GM12878 (cell line): ENCODE measurements at regions of chr10 and their contacts with region 1.

Region 1: GRCh38 chr10:62666275-62666674 is 138.2 kb upstream of the ADO start:
- DNase-seq: no peak
- ATAC-seq: peak; percentile 19; the same call in 1 of the 3 replicates
- H3K4me3 ChIP-seq: no peak overlapping the region
- H3K27ac ChIP-seq: no peak overlapping the region
- H3K4me1 ChIP-seq: peaks cover 4% of the 10 kb centered on the region; the same call in 1 of the 2 replicates
- H3K27me3 ChIP-seq: no peaks in the 10 kb centered on the region
- CTCF ChIP-seq: no peak
- EP300 ChIP-seq: no peak
- POLR2A ChIP-seq: no peak
- RAD21 ChIP-seq: no peak

Region 2: DNA sequence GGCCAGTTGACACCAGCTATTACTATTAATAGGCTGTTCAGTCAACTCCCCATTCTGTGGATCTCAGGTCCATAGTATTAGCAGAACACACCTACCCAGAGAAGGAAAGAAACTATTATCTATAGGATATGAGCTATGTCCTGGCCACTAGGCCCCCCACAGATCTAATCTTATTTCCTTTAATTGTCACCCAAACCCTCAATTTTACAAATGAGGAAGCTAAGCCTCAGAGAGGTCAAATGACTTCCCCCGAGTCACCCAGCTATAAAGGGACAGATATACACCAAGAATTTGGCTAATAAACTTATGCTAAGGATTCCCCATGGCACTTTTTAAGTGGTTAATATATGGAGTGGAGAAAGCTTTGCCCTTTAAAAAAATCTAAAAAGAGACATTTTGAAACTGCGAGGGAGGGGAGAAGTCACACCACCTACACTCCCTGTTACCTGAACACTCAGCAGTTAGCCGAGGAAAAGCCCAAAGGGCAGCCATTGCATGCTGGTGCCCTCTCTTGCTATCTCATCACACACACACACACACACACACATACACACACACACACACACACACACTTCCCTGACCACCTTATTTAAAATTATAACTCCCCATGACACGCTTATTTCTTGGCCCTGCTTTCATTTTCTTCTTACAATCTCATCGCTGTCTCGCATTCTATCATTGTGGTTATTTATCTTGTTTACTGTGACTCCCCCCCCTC is 18.7 kb before region 1 on chr10:
- CTCF ChIA-PET with region 1: no interaction called
- POLR2A ChIA-PET with region 1: interaction called, 3 read pairs
- RAD21 ChIA-PET with region 1: interaction called, 12 read pairs
- SMC1A ChIA-PET with region 1: interaction called, 21 read pairs
- in situ Hi-C with region 1: no loop called
- intact Hi-C with region 1: no loop called
- DNase-seq: no peak
- ATAC-seq: peak; percentile 59
- H3K4me3 ChIP-seq: no peak overlapping the region
- H3K27ac ChIP-seq: no peak overlapping the region
- H3K4me1 ChIP-seq: peaks cover 29% of the 10 kb centered on the region
- H3K27me3 ChIP-seq: no peaks in the 10 kb centered on the region
- CTCF ChIP-seq: no peak
- EP300 ChIP-seq: peak; percentile 29 to 40; a peak in 1 of 4 replicates
- POLR2A ChIP-seq: no peak
- RAD21 ChIP-seq: no peak

Region 3: DNA sequence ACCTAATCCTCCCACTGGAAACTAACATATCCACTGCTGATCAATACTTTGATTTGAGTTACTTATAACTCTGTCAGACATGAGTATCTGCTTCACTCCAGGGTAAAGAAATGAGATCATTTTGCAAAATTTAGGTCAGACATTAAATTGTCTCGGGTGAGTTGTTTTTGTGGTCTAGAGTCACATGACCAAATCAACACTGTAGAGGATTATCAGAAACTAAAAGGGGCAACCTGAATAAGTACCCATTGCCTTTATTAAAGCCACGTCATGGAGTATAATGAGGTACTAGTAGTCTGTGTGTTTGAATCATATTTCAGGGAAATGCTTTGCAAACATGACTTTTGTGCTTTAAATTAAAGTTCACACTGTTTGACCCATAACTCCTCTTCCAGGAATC is 30.5 kb after region 1 on chr10:
- CTCF ChIA-PET with region 1: no interaction called
- POLR2A ChIA-PET with region 1: no interaction called
- RAD21 ChIA-PET with region 1: no interaction called
- SMC1A ChIA-PET with region 1: no interaction called
- in situ Hi-C with region 1: no loop called
- intact Hi-C with region 1: no loop called
- DNase-seq: no peak
- ATAC-seq: peak; percentile 62
- H3K4me3 ChIP-seq: no peak overlapping the region
- H3K27ac ChIP-seq: no peak overlapping the region
- H3K4me1 ChIP-seq: peaks cover 2% of the 10 kb centered on the region
- H3K27me3 ChIP-seq: no peaks in the 10 kb centered on the region
- CTCF ChIP-seq: no peak
- EP300 ChIP-seq: no peak
- POLR2A ChIP-seq: no peak
- RAD21 ChIP-seq: no peak